ENCODE measurements at regions of chr2 and their contacts with region 1.

Region 1: DNA sequence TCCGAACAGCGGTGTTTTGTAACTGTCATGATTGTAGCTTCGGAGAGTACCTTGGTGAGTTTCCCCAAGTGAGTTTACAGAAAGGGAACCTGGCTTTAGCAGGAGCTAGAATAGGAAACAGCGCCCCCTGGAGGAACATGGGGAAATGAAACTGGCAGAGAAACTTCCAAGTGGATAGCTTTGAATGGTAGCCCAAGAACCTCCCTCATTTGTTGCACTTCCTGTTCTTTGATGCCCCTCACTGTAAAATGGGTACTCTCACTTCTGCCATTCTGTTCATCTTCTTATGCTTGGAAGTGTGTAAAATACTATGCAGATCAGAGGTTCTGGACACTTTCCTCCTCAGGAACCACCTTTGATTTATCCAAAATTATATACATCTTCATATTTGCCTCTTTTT is 36.2 kb downstream of the CHST10 start:
- DNase-seq: peak; percentile 69 to 93 (median 80)
- ATAC-seq: peak; percentile 86 to 98 (median 94)
- H3K4me3 ChIP-seq: no peak overlapping the region
- H3K27ac ChIP-seq: no peak overlapping the region
- H3K4me1 ChIP-seq: no peaks in the 10 kb centered on the region
- H3K27me3 ChIP-seq: no peaks in the 10 kb centered on the region
- CTCF ChIP-seq: peak; percentile 84 to 94 (median 90)

Region 2: GRCh38 chr2:100142393-100142792 is 238.8 kb before region 1 on chr2 and contains the start of gene AFF3:
- intact Hi-C with region 1: no loop called
- DNase-seq: no peak
- ATAC-seq: peak in 2 of 4 donors; percentile 13 to 32
- H3K4me3 ChIP-seq: no peak within 1 kb of the TSS
- H3K27ac ChIP-seq: no peak within 1 kb of the TSS
- H3K4me1 ChIP-seq: no peaks in the 10 kb centered on the region
- H3K27me3 ChIP-seq: no peaks in the 10 kb centered on the region
- CTCF ChIP-seq: no peak
- total RNA-seq, gene AFF3: 0.19 to 1.1 (median 0.64) TPM

Region 3: GRCh38 chr2:100262555-100263320 is 118.5 kb before region 1 on chr2:
- intact Hi-C with region 1: loop called (anchors 2 to 10 kb)
- DNase-seq: peak; percentile 28 to 88 (median 72)
- ATAC-seq: peak; percentile 69 to 89 (median 86)
- H3K4me3 ChIP-seq: no peak overlapping the region
- H3K27ac ChIP-seq: no peak overlapping the region
- H3K4me1 ChIP-seq: no peaks in the 10 kb centered on the region
- H3K27me3 ChIP-seq: no peaks in the 10 kb centered on the region
- CTCF ChIP-seq: peak; percentile 82 to 97 (median 94)

Region 4: GRCh38 chr2:100269889-100270288 is 111.4 kb before region 1 on chr2:
- intact Hi-C with region 1: loop called in 2 of 3 experiments (anchors 5 to 10 kb)
- DNase-seq: no peak
- ATAC-seq: no peak
- H3K4me3 ChIP-seq: no peak overlapping the region
- H3K27ac ChIP-seq: no peak overlapping the region
- H3K4me1 ChIP-seq: no peaks in the 10 kb centered on the region
- H3K27me3 ChIP-seq: no peaks in the 10 kb centered on the region
- CTCF ChIP-seq: no peak

Region 5: GRCh38 chr2:100427628-100428258 is 46.5 kb after region 1 on chr2:
- intact Hi-C with region 1: no loop called
- DNase-seq: peak in 5 of 6 donors; percentile 37 to 73 (median 55)
- ATAC-seq: peak; percentile 46 to 86 (median 76)
- H3K4me3 ChIP-seq: no peak overlapping the region
- H3K27ac ChIP-seq: no peak overlapping the region
- H3K4me1 ChIP-seq: no peaks in the 10 kb centered on the region
- H3K27me3 ChIP-seq: no peaks in the 10 kb centered on the region
- CTCF ChIP-seq: peak; percentile 6 to 35 (median 29)

Region 6: DNA sequence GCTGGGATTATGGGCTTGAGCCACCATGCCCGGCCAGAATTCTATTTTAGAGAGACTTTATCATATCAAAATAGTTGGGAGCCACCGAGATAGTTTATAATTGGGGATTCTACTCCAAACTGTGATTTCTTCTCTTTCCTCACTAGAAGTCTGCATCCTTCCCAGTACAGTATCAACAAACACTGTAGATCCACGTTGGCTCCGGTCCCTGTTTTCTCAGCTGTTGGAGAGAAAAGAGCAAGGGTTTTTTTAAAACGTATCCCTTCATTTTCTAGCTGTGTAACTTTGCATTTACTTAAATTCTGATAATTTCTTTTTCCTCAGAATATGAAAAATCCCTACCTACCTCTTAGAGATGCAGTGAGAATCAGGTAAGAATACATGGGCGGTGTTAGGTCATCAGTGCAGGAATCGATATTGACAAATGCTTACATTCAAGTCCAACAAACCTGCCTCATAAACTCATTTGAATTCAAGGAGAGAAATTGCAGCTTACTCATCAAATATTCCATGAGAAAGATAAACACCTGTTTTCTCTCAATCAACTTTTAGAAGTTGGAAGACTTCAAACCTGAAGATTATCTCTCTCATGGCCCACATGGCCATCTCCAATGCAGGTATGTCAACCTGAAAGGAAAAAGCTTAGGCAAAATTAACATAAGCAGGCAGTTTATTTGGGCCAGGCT is 163.8 kb after region 1 on chr2:
- intact Hi-C with region 1: no loop called
- DNase-seq: no peak
- ATAC-seq: no peak
- H3K4me3 ChIP-seq: no peak overlapping the region
- H3K27ac ChIP-seq: no peak overlapping the region
- H3K4me1 ChIP-seq: no peaks in the 10 kb centered on the region
- H3K27me3 ChIP-seq: no peaks in the 10 kb centered on the region
- CTCF ChIP-seq: no peak

Measured in pancreas (tissue), 10 donors.